ENCODE measurements at regions of chr22 and their contacts with region 1.

Region 1: DNA sequence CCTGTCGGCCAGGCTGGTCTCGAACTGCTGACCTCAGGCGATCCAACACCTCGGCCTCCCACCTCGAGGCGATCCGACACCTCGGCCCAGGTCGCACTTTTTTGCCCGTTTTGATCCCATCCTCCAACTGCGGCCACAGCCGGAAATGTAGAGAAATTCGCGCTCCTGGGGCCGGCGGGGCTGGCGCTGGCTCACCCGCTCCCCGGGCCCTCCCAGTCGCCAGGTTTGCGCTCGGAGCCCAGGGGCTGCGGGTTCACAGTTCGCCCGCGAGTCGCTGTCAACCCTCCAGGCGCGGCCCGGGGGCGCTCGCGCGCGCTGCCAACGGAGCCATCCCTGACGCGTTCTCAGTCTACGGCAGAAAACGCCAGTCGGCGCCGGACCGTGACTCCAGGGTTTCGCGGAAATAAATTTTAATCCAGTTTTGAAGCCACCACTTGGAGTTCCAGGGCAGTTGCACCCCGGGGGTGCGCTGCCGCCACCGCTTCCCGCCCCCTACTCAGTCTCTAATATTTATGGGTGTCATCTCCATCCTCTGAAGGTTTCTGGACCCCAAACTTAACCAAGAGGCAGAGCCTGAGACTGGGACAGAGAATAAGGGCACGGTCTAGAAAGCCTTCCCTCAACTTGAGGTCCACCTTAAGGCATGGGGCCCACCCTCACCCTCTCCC is 1.5 kb upstream of the KLHDC7B start:
- DNase-seq: peak; percentile 62 to 92 (median 84)
- ATAC-seq: peak; percentile 54
- H3K4me3 ChIP-seq: peak overlapping the region; percentile 43 to 48
- H3K4me3 Mint-ChIP-seq: peak overlapping the region; percentile 54
- H3K27ac ChIP-seq: peak overlapping the region; percentile 40 to 81
- H3K27ac Mint-ChIP-seq: peak overlapping the region; percentile 57
- H3K4me1 ChIP-seq: peaks cover 42% of the 10 kb centered on the region
- H3K4me1 Mint-ChIP-seq: peaks cover 45% of the 10 kb centered on the region
- H3K27me3 ChIP-seq: no peaks in the 10 kb centered on the region
- H3K27me3 Mint-ChIP-seq: no peaks in the 10 kb centered on the region
- CTCF ChIP-seq: peak; percentile 75

Region 2: GRCh38 chr22:50507991-50508884 is 36.0 kb before region 1 on chr22 and contains the start of gene NCAPH2:
- CTCF ChIA-PET with region 1: no interaction called
- POLR2A ChIA-PET with region 1: interaction called, 10 read pairs
- intact Hi-C with region 1: no loop called
- DNase-seq: peak in 8 of 9 experiments; percentile 94 to 99 (median 98)
- ATAC-seq: peak; percentile 74
- H3K4me3 ChIP-seq: peak within 1 kb of the TSS; percentile 88 to 97
- H3K4me3 Mint-ChIP-seq: peak within 1 kb of the TSS; percentile 96
- H3K27ac ChIP-seq: peak within 1 kb of the TSS; percentile 93
- H3K27ac Mint-ChIP-seq: peak within 1 kb of the TSS; percentile 99
- H3K4me1 ChIP-seq: peaks cover 23% of the 10 kb centered on the region
- H3K4me1 Mint-ChIP-seq: peaks cover 26% of the 10 kb centered on the region
- H3K27me3 ChIP-seq: no peaks in the 10 kb centered on the region
- H3K27me3 Mint-ChIP-seq: no peaks in the 10 kb centered on the region
- CTCF ChIP-seq: no peak
- total RNA-seq, gene NCAPH2: 206 to 209 TPM

Region 3: DNA sequence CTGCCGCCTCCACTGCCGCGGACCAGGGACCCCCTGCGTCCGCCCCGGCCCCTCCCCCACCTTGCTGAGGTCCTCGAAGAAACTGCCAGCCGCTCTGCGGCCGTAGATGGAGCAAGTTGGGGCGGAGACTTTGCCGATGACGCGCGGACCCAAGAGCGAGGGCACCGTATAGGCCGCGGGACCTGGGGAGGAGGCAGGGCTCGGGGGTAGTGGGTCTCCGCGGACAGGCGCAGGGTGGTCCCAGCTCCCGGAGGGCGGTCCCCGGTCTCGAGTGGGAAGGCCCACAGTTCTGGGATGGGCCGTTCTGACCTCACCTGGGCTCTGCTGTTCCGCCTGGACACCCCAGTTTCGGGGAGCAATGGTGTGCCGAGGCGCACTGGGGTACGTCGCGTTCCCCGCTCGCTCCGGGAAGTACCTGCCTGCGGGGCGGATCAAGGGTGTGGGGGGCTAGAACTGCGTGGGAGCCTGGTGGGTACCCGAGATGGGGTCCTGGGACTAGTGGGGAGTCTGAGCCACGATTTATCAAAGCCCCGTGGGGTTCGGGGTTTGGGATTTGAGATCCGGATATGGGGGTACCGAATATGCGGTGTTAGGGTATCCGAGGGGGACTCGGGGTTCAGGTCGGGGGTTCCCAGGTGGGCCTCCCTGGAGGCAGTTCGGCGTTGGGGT is 13.2 kb before region 1 on chr22:
- CTCF ChIA-PET with region 1: interaction called, 36 read pairs
- POLR2A ChIA-PET with region 1: interaction called, 52 read pairs
- intact Hi-C with region 1: loop called (anchors 1 kb)
- DNase-seq: peak; percentile 67 to 89 (median 75)
- ATAC-seq: peak; percentile 52
- H3K4me3 ChIP-seq: peak overlapping the region; percentile 64 to 70
- H3K4me3 Mint-ChIP-seq: peak overlapping the region; percentile 87
- H3K27ac ChIP-seq: peak overlapping the region; percentile 81 to 95
- H3K27ac Mint-ChIP-seq: peak overlapping the region; percentile 96
- H3K4me1 ChIP-seq: peaks cover 31% of the 10 kb centered on the region
- H3K4me1 Mint-ChIP-seq: peaks cover 25% of the 10 kb centered on the region
- H3K27me3 ChIP-seq: peaks cover 0 to 2% of the 10 kb centered on the region in 2 experiments
- H3K27me3 Mint-ChIP-seq: peaks cover 8% of the 10 kb centered on the region
- CTCF ChIP-seq: no peak

Region 4: DNA sequence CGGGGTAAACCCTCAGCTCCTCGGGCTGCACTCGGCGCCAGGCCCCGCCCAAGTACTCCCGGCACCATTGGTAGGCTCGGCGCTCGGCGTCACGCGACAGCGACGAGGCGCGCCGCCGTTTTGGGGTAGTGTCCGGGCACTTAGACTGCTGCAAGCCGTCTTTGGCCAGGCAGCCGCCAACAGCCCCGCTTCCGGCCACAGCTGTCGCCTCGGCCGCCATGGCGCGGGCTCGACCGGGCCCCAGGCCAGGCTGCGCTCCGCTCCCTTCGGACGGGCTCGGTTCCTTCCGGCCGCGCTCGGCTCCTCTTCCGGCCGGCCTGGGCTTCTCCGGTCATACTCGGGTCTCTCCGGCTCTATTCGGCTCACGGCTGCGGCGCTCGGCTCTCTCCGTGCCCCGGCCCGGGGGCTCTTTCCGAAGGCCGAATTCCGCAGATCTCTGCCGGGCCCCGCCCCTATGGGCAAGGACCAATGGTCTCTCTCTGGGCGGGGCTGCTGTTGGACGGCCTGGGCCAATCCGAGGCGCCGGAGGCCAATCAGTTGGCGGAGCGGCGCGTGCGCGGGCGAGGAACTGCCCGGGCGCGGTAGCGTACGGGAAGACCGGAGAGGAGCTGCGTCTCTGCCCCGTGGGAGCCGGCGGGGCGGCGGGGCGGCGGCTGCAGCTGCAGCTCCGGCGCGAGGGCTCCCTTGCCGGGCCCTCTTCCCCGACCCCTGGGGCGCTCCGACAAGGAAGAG is 38.5 kb after region 1 on chr22 and contains the start of gene CHKB:
- CTCF ChIA-PET with region 1: interaction called, 3 read pairs
- POLR2A ChIA-PET with region 1: interaction called, 13 read pairs
- intact Hi-C with region 1: loop called in 1 of 2 experiments (anchors 2 kb)
- DNase-seq: peak; percentile 95 to 99 (median 98)
- ATAC-seq: peak; percentile 94
- H3K4me3 ChIP-seq: peak within 1 kb of the TSS; percentile 77 to 78
- H3K4me3 Mint-ChIP-seq: peak within 1 kb of the TSS; percentile 93
- H3K27ac ChIP-seq: peak within 1 kb of the TSS; percentile 93 to 94
- H3K27ac Mint-ChIP-seq: peak within 1 kb of the TSS; percentile 97
- H3K4me1 ChIP-seq: peaks cover 16% of the 10 kb centered on the region
- H3K4me1 Mint-ChIP-seq: peaks cover 30% of the 10 kb centered on the region
- H3K27me3 ChIP-seq: no peaks in the 10 kb centered on the region
- H3K27me3 Mint-ChIP-seq: no peaks in the 10 kb centered on the region
- CTCF ChIP-seq: no peak
- total RNA-seq, gene CHKB: 112 to 115 TPM

Region 5: DNA sequence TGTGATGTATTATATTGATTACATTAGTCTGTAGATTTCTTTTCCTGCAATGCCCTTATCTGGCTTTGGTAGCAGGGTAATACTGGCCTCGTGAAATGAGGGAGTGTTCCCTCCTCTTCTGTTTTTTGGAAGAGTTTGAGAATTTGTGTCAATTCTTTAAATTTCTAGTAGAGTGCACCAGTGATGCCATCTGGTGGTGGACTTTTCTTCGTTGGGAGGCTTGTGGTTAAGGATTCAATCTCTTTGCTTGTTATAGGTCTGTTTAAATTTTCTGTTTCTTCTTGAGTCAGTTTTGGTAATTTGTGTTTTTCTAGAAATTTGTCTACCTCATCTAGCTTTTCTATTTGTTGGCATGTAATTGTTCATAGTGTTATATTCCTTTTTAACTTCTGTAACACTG is 147.3 kb after region 1 on chr22:
- CTCF ChIA-PET with region 1: no interaction called
- POLR2A ChIA-PET with region 1: no interaction called
- intact Hi-C with region 1: loop called in 1 of 2 experiments (anchors 5 kb)
- DNase-seq: peak in 4 of 9 experiments; percentile 27 to 63 (median 42)
- ATAC-seq: no peak
- H3K4me3 ChIP-seq: no peak overlapping the region
- H3K4me3 Mint-ChIP-seq: no peak overlapping the region
- H3K27ac ChIP-seq: no peak overlapping the region
- H3K27ac Mint-ChIP-seq: no peak overlapping the region
- H3K4me1 ChIP-seq: no peaks in the 10 kb centered on the region
- H3K4me1 Mint-ChIP-seq: no peaks in the 10 kb centered on the region
- H3K27me3 ChIP-seq: peaks cover 0 to 2% of the 10 kb centered on the region in 2 experiments
- H3K27me3 Mint-ChIP-seq: peaks cover 4% of the 10 kb centered on the region
- CTCF ChIP-seq: peak; percentile 42